ENCODE measurements at regions of chr1 and their contacts with region 1.

Region 1: DNA sequence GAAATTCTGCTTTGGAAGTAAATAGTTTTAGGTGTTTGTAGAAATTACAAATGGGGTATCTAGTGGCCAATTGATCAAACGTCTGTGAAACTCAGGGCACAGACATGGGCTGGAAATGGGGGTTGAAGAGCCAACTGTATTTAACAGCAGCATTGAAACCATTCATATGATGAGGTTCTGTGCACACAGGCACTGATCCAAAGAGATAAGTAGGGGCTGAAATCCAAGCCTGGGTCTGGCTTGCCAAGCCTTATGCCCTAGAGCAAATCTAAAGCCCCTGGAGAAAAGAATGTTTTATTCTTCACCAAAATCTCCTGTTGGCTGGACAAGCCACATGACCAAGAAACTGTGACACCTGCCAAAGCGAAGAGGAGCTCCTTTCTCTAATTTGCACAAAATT is 67.6 kb upstream of the ST6GALNAC5 start:
- DNase-seq: peak in 1 of 3 donors; percentile 55
- ATAC-seq: peak in 1 of 2 donors; percentile 48
- H3K4me3 ChIP-seq: no peak overlapping the region
- H3K27ac ChIP-seq: no peak overlapping the region
- H3K4me1 ChIP-seq: no peaks in the 10 kb centered on the region
- H3K27me3 ChIP-seq: no peaks in the 10 kb centered on the region

Region 2: DNA sequence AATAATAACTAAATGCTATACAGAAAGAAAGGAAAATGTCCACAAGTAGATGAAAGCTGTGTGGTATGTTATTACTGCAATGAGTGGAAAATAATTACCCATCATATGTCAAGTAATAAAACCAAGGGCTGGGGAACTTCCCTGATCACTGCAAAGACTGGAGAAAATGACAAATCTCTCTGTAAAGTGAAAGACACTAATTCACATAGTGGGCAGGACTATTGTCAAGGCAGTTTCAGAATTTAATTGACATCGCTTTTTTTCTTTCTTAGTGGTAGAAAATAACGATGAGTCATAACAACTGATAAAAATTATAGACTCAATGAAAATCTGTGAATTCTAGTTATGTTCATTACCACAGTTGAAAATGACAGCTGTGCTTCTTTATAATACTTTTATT is 86.2 kb before region 1 on chr1:
- intact Hi-C with region 1: no loop called
- DNase-seq: no peak
- ATAC-seq: no peak
- H3K4me3 ChIP-seq: no peak overlapping the region
- H3K27ac ChIP-seq: no peak overlapping the region
- H3K4me1 ChIP-seq: no peaks in the 10 kb centered on the region
- H3K27me3 ChIP-seq: peaks cover 2% of the 10 kb centered on the region

Region 3: DNA sequence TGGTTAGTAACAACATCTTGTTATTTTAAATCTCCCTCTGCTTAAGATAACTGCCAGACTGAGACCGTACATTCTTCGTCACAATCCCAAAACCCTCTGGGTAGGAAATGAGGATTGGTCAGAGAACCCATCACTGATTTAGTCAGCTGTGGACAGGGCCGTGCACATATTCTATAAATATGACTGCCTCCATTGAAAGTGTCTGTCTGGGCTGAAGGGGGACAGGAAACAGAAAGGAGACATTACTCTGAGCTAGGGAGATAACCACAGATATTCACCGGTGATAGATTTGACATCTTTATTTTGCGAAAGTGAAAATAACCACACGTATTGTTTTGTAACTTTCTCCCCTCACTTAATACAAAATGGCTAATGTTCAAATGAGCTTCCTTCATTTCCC is 30.7 kb after region 1 on chr1:
- intact Hi-C with region 1: loop called in 1 of 4 experiments (anchors 5 kb)
- DNase-seq: no peak
- ATAC-seq: no peak
- H3K4me3 ChIP-seq: peak overlapping the region; percentile 26
- H3K27ac ChIP-seq: no peak overlapping the region
- H3K4me1 ChIP-seq: no peaks in the 10 kb centered on the region
- H3K27me3 ChIP-seq: no peaks in the 10 kb centered on the region

Region 4: DNA sequence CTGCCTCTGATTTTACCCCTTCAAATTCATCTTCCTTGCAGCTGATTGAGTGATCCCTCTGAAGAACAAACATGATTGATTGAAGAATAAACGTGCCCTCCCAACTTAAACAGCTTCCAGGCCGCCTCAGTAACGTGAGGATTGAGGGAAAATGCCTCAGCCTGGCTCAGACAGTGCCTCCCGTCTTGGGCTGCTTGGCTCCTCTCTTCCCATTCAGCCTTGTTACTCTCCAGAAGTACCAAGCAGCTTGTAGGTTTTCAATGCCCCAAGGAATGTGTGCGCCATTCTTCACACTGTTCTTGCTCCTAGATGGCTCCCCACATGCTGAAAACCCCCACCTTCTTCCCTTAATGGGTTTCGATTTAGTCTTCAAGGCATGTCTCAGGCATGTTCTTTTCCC is 119.4 kb after region 1 on chr1:
- intact Hi-C with region 1: no loop called
- DNase-seq: no peak
- ATAC-seq: no peak
- H3K4me3 ChIP-seq: no peak overlapping the region
- H3K27ac ChIP-seq: no peak overlapping the region
- H3K4me1 ChIP-seq: no peaks in the 10 kb centered on the region
- H3K27me3 ChIP-seq: no peaks in the 10 kb centered on the region

Region 5: DNA sequence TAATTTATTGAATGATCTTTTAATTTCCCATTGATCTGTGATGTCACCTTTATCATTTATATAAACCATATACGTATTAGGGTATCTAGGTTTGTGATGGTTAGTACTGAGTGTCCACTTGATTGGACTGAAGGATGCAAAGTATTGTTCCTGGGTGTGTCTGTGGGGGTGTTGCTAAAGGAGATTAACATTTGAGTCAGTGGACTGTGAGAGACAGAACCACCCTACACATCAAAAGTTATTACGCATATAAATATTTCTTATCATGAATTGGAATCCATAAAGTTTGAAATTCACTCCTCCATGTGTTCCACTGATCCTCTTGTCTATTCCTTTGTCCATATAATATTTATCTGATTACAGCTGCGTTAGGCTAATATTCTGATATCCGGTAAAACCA is 319.0 kb after region 1 on chr1:
- intact Hi-C with region 1: no loop called
- DNase-seq: no peak
- ATAC-seq: no peak
- H3K4me3 ChIP-seq: no peak overlapping the region
- H3K27ac ChIP-seq: no peak overlapping the region
- H3K4me1 ChIP-seq: no peaks in the 10 kb centered on the region
- H3K27me3 ChIP-seq: no peaks in the 10 kb centered on the region